ENCODE measurements at regions of chr3 and their contacts with region 1.

Region 1: DNA sequence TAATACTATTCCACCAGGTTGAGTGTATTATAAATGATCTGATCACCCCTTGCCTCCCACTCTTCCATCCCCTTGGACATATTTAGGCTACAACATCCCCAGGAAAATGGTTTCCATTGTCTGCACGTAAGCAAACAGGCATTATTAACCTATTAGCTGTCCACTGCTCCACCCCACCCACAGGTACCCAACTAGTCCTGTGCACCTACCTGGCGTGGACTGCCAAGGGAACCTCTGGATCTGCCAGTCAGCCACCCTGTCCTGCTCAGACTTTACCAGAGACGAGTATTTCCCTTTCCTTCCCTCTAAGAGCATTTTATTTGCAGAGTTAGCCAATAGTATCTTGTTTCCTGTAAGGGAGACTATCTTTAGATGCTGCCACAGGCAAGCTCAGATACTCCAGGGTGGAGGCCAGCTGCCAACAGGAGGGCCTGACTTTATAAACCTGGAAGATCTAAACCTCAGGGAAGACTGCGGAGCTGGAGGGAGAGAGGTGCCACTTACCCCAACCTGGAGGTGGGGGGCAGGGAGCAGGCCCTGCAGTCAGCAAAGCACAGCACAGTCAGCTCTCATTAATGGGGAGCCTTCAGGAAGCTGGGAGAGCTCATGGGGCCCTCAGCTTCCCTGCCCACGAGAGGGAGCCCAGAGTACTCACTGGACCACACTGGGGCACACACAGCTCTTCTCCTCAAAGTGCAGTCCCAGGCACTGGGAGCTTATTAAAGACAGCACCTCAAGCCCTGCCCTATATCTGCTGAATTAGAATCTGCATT is at the start of gene CX3CR1:
- DNase-seq: no peak
- ATAC-seq: no peak
- H3K4me3 ChIP-seq: peak within 1 kb of the TSS in 1 of 2 donors; percentile 40
- H3K4me3 Mint-ChIP-seq: peak within 1 kb of the TSS; percentile 48 to 74 (median 63)
- H3K27ac ChIP-seq: no peak within 1 kb of the TSS
- H3K27ac Mint-ChIP-seq: peak within 1 kb of the TSS; percentile 44 to 45
- H3K4me1 ChIP-seq: peaks cover 0 to 57% of the 10 kb centered on the region in 2 experiments
- H3K4me1 Mint-ChIP-seq: peaks cover 13 to 45% (median 13%) of the 10 kb centered on the region in 3 donors
- H3K27me3 ChIP-seq: no peaks in the 10 kb centered on the region
- H3K27me3 Mint-ChIP-seq: no peaks in the 10 kb centered on the region
- total RNA-seq, gene CX3CR1: 1.9 to 23.8 (median 5.8) TPM

Region 2: DNA sequence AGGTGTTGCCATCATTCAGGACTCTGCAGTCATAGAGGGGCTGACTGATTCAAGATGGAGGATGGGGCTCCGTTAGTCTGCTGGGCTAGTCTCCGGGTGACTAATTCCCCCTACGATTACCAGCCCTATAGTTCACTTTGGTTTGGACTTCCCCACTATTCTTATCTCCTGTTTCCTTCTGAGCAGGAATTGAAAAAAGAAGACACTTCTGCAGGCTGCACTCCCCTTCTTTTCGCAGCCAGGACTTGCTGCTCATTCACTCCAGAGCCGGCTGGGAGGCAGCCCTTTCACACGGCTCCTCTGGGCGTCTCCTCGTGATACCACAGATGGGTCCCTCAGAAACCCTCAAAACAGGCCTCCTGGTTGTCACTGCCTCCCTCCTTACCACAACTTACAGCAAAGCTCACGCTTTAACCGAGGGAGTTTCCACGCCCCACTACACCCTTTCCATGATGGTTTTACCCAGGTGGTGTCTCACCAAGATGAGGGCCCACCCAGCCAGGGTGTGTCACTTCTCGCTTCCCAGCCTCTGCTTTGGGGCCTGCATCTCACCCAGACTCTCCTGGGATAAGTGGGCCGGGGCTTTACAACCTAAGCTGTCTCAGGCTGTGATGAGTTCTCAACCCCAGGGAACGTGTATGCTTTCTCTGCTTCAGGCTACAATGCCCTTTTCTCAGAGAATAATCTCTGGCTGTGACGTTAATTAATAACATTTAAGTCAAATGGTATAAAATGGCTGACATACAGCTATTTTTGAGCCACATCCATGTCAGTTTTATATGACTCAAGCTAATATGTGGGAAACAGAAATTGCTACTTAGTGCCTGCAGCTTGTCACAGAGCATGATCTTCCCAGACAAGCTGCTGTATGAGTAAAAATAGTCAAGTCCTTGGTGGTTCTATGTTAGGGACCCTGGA is 12.0 kb before region 1 on chr3:
- CTCF ChIA-PET with region 1: interaction called in 1 of 2 experiments, 4 read pairs
- POLR2A ChIA-PET with region 1: interaction called in 1 of 2 experiments, 10 read pairs
- DNase-seq: peak; percentile 9 to 88 (median 64)
- ATAC-seq: peak; percentile 71 to 97 (median 86)
- H3K4me3 ChIP-seq: no peak overlapping the region
- H3K4me3 Mint-ChIP-seq: peak overlapping the region; percentile 46 to 58 (median 50)
- H3K27ac ChIP-seq: peak overlapping the region; percentile 79
- H3K27ac Mint-ChIP-seq: peak overlapping the region; percentile 82 to 88
- H3K4me1 ChIP-seq: peaks cover 8 to 83% of the 10 kb centered on the region in 2 experiments
- H3K4me1 Mint-ChIP-seq: peaks cover 20 to 66% (median 23%) of the 10 kb centered on the region in 3 donors
- H3K27me3 ChIP-seq: no peaks in the 10 kb centered on the region
- H3K27me3 Mint-ChIP-seq: no peaks in the 10 kb centered on the region

Region 3: GRCh38 chr3:40490916-40491315 is 1211.0 kb after region 1 on chr3:
- CTCF ChIA-PET with region 1: no interaction called
- POLR2A ChIA-PET with region 1: interaction called in 1 of 2 experiments, 11 read pairs
- DNase-seq: no peak
- ATAC-seq: no peak
- H3K4me3 ChIP-seq: no peak overlapping the region
- H3K4me3 Mint-ChIP-seq: no peak overlapping the region
- H3K27ac ChIP-seq: no peak overlapping the region
- H3K27ac Mint-ChIP-seq: no peak overlapping the region
- H3K4me1 ChIP-seq: no peaks in the 10 kb centered on the region
- H3K4me1 Mint-ChIP-seq: no peaks in the 10 kb centered on the region
- H3K27me3 ChIP-seq: no peaks in the 10 kb centered on the region
- H3K27me3 Mint-ChIP-seq: no peaks in the 10 kb centered on the region